SK-N-SH (cell line): ENCODE measurements at regions of chr1 and their contacts with region 1.

Region 1: DNA sequence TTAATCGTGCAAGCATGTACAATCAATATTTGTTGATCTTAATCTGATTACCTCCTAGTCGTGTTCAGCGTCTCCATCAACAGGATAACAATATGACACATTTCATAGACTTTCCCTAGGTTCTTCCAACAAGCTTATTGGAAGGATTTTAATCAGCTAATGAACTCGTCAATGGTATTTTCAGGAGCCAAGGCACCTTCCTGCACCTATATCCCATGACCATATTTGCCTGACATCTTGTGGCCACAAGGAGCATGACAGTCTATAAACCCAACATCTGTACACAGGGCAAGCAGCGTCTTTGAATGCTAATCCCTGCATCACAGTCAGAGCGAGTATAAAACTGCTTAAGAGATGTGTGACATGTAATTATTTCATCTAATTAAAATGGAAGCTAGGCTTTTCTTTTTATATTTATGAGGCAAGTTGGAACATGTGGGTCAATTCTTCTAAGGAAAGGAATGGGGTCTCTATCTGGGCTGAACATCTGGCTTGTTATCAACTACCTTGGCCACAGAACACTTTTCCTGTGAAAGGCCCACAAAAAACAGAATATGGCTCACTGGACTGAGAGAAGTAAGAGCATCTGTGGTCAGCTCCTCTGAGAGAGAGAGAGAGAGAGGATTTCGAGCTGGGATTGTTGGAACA is 388.8 kb downstream of the NTNG1 start:
- DNase-seq: peak; percentile 67
- H3K4me3 ChIP-seq: no peak overlapping the region
- H3K27ac ChIP-seq: no peak overlapping the region
- H3K4me1 ChIP-seq: peaks cover 0 to 7% of the 10 kb centered on the region in 2 experiments; a peak in 1 of 4 replicates
- H3K27me3 ChIP-seq: no peaks in the 10 kb centered on the region
- CTCF ChIP-seq: peak; percentile 73
- EP300 ChIP-seq: no peak
- RAD21 ChIP-seq: peak; percentile 93

Region 2: DNA sequence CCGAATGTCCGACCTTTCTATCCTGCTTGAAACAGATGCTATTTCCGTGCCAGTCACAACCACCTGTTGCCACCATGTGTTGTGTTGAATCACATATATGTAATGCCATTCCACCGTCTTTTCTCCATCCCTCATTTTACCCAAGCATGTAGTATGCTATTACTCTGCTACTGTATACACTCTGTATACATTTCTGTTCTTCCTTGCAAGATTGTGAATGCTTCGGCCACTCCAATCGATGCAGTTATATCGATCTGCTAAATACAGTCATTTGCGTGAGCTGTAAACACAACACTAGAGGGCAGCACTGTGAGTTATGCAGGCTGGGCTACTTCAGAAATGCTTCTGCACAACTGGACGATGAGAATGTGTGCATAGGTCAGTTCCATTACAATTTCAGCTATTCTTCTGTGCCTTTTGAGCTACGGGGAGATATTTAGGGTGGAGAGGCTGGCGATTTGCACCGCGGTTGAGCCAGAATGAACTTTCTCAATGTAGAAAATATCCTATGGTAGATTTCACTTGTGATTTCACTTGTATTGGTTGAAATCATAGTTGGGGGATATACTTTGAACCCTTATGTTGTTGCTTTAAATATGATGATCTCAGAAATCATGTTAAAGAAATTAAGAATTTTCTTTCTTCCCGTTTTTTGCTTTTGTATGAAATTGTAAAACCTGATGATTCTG is 98.9 kb before region 1 on chr1:
- CTCF ChIA-PET with region 1: interaction called, 16 read pairs
- POLR2A ChIA-PET with region 1: no interaction called
- DNase-seq: peak; percentile 12
- H3K4me3 ChIP-seq: no peak overlapping the region
- H3K27ac ChIP-seq: no peak overlapping the region
- H3K4me1 ChIP-seq: no peaks in the 10 kb centered on the region; a peak in 1 of 4 replicates
- H3K27me3 ChIP-seq: no peaks in the 10 kb centered on the region
- CTCF ChIP-seq: peak; percentile 84
- EP300 ChIP-seq: no peak
- RAD21 ChIP-seq: peak; percentile 63

Region 3: GRCh38 chr1:107515702-107516101 is 13.9 kb before region 1 on chr1:
- CTCF ChIA-PET with region 1: interaction called, 16 read pairs
- POLR2A ChIA-PET with region 1: no interaction called
- DNase-seq: no peak
- H3K4me3 ChIP-seq: no peak overlapping the region
- H3K27ac ChIP-seq: no peak overlapping the region
- H3K4me1 ChIP-seq: no peaks in the 10 kb centered on the region
- H3K27me3 ChIP-seq: no peaks in the 10 kb centered on the region
- CTCF ChIP-seq: no peak
- EP300 ChIP-seq: no peak
- RAD21 ChIP-seq: no peak

Region 4: GRCh38 chr1:107559881-107560280 is 30.3 kb after region 1 on chr1:
- CTCF ChIA-PET with region 1: interaction called, 10 read pairs
- POLR2A ChIA-PET with region 1: no interaction called
- DNase-seq: no peak
- H3K4me3 ChIP-seq: no peak overlapping the region
- H3K27ac ChIP-seq: no peak overlapping the region
- H3K4me1 ChIP-seq: peaks cover 0 to 10% of the 10 kb centered on the region in 2 experiments; a peak in 2 of 4 replicates
- H3K27me3 ChIP-seq: no peaks in the 10 kb centered on the region
- CTCF ChIP-seq: no peak
- EP300 ChIP-seq: no peak
- RAD21 ChIP-seq: no peak

Region 5: DNA sequence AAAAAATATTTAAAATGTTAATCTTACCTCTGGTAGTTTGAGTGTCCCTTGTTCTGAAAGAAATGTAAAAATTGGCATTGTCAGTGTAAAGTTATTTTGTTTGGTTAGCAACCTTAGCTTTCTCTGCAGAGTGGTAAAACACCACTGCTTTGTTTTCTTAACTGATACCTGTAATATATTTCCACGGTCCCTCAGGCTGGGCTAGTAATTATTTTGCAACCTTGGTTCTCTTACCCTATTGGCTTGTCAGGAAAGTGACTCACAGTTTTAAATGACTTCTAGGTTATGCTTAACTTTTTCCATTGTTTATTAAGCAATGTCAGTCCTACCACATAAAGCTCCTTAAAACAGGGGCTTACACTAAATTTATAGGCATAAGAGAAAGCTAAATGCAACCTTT is 158.7 kb after region 1 on chr1:
- CTCF ChIA-PET with region 1: no interaction called
- POLR2A ChIA-PET with region 1: no interaction called
- DNase-seq: no peak
- H3K4me3 ChIP-seq: no peak overlapping the region
- H3K27ac ChIP-seq: no peak overlapping the region
- H3K4me1 ChIP-seq: peaks cover 0 to 6% of the 10 kb centered on the region in 2 experiments; a peak in 2 of 4 replicates
- H3K27me3 ChIP-seq: no peaks in the 10 kb centered on the region
- CTCF ChIP-seq: no peak
- EP300 ChIP-seq: no peak
- RAD21 ChIP-seq: no peak